ENCODE measurements at regions of chr2 and their contacts with region 1.

Region 1: DNA sequence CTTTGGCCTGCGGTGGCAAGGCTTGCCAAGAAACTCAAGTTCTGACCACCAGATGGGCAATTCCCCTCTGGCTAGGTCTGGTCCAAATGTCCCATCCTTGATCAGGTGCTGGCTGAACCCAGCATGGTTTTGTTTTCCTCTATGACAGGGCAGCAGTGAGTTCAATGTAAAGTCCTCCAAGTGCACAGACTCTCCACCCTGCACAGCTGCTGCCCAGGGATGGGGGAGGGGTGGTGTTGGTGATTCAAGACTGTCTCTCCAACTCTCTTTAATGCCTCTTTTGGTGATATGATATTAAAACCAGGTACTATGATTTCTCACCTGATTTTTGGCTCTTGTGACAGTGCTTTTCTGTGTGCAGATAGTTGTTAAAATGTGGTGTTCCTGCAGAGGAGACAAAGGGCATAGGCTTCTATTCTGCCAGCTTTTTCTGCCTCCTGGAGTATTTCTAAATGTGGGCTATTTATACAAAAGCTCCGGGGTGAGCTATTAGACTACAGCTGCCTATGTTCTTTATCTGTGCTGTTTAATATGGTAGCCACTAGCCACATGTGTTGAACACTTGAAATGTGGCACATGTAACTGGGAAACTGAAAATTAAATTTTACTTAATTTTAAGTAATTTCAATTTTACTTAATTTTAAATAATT is 64.0 kb upstream of the STK39 start:
- DNase-seq: no peak
- ATAC-seq: peak in 2 of 8 donors; percentile 31 to 32
- H3K4me3 ChIP-seq: no peak overlapping the region
- H3K27ac ChIP-seq: peak overlapping the region in 1 of 10 donors; percentile 14
- H3K4me1 ChIP-seq: peaks cover 0 to 26% (median 11%) of the 10 kb centered on the region in 9 donors
- H3K27me3 ChIP-seq: no peaks in the 10 kb centered on the region
- CTCF ChIP-seq: no peak

Region 2: DNA sequence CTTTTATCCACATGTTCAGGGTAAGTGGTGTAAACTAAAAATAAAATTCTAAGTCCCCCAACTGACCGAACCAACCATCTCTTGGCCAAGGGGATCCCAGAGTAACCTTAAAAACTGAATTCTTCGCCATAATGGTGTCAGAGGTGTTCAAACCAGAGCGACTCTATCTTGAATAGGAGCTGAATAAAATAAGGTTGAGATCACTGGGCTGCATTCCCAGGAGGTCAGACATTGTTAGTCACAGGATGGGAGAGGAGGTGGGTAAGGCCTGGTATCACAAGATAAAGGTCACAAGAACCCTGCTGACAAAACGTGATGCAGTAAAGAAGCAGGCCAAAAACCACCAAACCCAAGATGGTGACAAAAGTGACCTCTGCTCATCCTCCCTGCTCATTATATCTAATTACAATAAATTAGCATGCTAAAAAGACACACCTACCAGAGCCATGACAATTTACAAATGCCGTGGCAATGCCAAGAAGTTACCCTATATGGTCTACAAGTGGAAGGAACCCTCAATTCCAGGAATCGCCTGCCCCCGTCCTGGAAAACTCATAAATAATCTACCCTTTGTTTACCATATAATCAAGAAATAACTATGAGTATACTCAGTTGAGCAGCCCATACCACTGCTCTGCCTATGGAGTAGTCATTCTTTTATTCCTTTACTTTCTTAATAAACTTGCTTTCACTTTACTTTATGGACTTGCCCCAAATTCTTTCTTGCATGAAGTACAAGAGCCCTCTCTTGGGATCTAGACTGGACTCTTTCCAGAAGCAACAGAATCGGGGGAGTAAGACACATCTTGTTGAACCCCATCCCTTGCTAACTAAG is 366.3 kb before region 1 on chr2:
- intact Hi-C with region 1: no loop called
- DNase-seq: no peak
- ATAC-seq: peak in 2 of 8 donors; percentile 37 to 53
- H3K4me3 ChIP-seq: no peak overlapping the region
- H3K27ac ChIP-seq: no peak overlapping the region
- H3K4me1 ChIP-seq: peaks cover 0 to 17% (median 0%) of the 10 kb centered on the region in 9 donors
- H3K27me3 ChIP-seq: no peaks in the 10 kb centered on the region
- CTCF ChIP-seq: no peak

Region 3: GRCh38 chr2:168272225-168272624 is 39.2 kb before region 1 on chr2:
- intact Hi-C with region 1: loop called in 1 of 10 experiments (anchors 10 kb)
- DNase-seq: no peak
- ATAC-seq: peak in 2 of 8 donors; percentile 24 to 48
- H3K4me3 ChIP-seq: no peak overlapping the region
- H3K27ac ChIP-seq: no peak overlapping the region
- H3K4me1 ChIP-seq: no peaks in the 10 kb centered on the region
- H3K27me3 ChIP-seq: no peaks in the 10 kb centered on the region
- CTCF ChIP-seq: no peak

Measured in heart right ventricle (tissue), 16 donors.